CD4-positive, alpha-beta memory T cell (primary cell): ENCODE measurements at regions of chr12 and their contacts with region 1.

Region 1: DNA sequence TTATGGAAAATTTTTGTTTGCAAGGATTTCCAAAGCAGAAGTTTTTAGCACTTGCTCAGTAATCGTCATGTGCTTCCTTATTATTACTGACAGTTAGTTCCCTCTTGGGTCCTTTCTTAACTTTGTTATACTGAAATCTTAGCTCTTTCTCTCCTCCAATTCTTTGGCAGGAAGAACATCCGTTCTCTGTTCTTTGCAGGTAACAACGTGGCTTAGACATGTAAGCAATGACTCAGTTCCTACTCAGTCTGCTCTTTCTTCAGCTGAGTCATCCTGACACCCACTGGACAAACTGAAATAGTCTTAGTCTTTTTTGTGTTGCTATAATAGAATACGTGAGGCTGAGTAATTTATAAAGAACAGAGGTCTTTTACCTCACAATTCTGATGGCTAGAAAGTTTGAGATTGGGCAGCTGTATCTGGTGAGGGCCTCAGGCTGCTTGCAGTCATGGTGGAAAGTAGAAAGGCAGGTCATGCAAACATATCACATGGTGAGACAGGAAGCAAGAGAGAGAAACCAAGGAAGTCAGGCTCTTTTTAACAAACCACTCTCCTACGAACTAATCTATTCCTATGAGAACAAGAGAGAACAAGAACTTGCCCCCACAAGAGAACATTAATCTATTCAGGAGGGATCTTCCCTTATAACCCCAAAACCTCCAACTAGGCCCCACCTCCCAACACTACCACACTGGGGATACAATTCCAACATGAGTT is 49.2 kb downstream of the TESPA1 start:
- DNase-seq: peak; percentile 53 to 71 (median 60)
- H3K4me3 ChIP-seq: no peak overlapping the region
- H3K4me3 Mint-ChIP-seq: peak overlapping the region in 7 of 8 donors; percentile 42 to 85 (median 74)
- H3K27ac ChIP-seq: peak overlapping the region; percentile 35
- H3K27ac Mint-ChIP-seq: peak overlapping the region; percentile 80 to 96 (median 91)
- H3K4me1 ChIP-seq: peaks cover 45% of the 10 kb centered on the region
- H3K4me1 Mint-ChIP-seq: peaks cover 33 to 53% (median 44%) of the 10 kb centered on the region in 4 donors
- H3K27me3 ChIP-seq: no peaks in the 10 kb centered on the region
- H3K27me3 Mint-ChIP-seq: no peaks in the 10 kb centered on the region

Region 2: DNA sequence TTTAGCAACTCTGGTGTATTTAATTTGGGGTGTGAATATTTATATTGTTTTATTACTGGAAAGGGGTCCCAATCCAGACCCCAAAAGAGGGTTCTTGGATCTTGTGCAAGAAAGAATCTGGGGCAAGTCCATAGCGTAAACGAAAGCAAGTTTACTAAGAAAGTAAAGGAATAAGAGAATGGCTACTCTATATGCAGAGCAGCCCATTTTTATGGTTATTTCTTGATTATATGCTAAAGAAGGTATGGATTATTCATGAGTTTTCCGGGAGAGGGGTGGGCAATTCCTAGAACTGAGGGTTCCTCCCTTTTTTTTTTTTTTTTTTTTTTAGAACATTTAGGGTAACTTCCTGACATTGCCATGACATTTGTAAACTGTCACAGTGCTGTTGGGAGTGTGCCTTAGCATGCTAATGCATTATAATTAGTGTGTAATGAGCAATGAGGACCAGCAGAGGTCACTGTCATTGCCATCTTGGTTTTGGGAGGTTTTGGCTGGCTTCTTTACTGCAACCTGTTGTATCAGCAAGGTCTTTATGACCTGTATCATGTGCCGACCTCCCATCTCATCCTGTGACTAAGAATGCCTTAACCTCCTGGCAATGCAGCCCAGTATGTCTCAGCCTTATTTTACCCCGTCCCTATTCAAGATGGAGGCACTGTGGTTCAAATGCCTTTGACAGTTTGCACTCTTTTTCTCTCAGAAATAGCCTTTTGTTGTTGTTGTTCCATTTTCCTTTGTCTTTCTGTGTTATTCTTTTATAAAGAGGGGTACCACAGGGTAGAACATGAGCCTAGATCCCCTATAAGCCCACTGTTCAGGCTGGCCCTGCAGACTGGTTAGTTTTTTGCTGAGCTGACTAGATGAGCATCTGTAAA is 211.8 kb before region 1 on chr12:
- CTCF ChIA-PET with region 1: interaction called, 3 read pairs
- POLR2A ChIA-PET with region 1: no interaction called
- intact Hi-C with region 1: loop called (anchors 1 kb)
- DNase-seq: peak; percentile 38 to 54 (median 44)
- H3K4me3 ChIP-seq: no peak overlapping the region
- H3K4me3 Mint-ChIP-seq: no peak overlapping the region
- H3K27ac ChIP-seq: no peak overlapping the region
- H3K27ac Mint-ChIP-seq: no peak overlapping the region
- H3K4me1 ChIP-seq: peaks cover 4% of the 10 kb centered on the region
- H3K4me1 Mint-ChIP-seq: peaks cover 5 to 32% (median 12%) of the 10 kb centered on the region in 4 donors
- H3K27me3 ChIP-seq: no peaks in the 10 kb centered on the region
- H3K27me3 Mint-ChIP-seq: peaks cover 7 to 10% of the 10 kb centered on the region in 2 donors

Region 3: DNA sequence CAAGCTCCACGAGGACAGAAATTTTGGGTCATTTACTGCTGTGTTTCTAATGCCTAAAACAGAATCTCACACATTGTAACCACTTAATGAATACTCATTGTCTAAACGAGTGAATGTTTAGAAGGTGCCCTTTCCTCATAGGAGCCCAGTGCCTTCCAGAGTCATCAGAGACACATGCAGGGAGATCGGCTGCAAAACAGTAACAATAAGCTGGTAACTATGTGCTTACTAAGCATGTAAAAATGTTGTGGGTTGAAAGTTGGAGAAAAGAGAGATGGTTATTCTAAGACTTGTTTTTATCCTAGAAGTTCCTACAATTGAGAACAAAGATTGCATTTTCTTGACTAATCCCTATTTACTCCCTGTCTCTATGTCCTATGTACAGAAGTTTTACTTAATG is 41.8 kb after region 1 on chr12:
- CTCF ChIA-PET with region 1: interaction called, 4 read pairs
- POLR2A ChIA-PET with region 1: interaction called, 50 read pairs
- intact Hi-C with region 1: no loop called
- DNase-seq: no peak
- H3K4me3 ChIP-seq: peak overlapping the region; percentile 16 to 22
- H3K4me3 Mint-ChIP-seq: peak overlapping the region; percentile 81 to 99 (median 93)
- H3K27ac ChIP-seq: peak overlapping the region; percentile 38
- H3K27ac Mint-ChIP-seq: peak overlapping the region; percentile 84 to 99 (median 94)
- H3K4me1 ChIP-seq: peaks cover 98% of the 10 kb centered on the region
- H3K4me1 Mint-ChIP-seq: peaks cover 77 to 98% (median 90%) of the 10 kb centered on the region in 4 donors
- H3K27me3 ChIP-seq: no peaks in the 10 kb centered on the region
- H3K27me3 Mint-ChIP-seq: no peaks in the 10 kb centered on the region

Region 4: GRCh38 chr12:54984658-54985376 is 49.4 kb after region 1 on chr12 and contains the start of gene TESPA1:
- CTCF ChIA-PET with region 1: interaction called, 14 read pairs
- POLR2A ChIA-PET with region 1: interaction called, 50 read pairs
- intact Hi-C with region 1: no loop called
- DNase-seq: peak; percentile 86 to 94 (median 90)
- H3K4me3 ChIP-seq: peak within 1 kb of the TSS; percentile 66 to 86
- H3K4me3 Mint-ChIP-seq: peak within 1 kb of the TSS; percentile 89 to 99 (median 95)
- H3K27ac ChIP-seq: peak within 1 kb of the TSS; percentile 92
- H3K27ac Mint-ChIP-seq: peak within 1 kb of the TSS; percentile 97 to 100 (median 98)
- H3K4me1 ChIP-seq: peaks cover 71% of the 10 kb centered on the region
- H3K4me1 Mint-ChIP-seq: peaks cover 53 to 97% (median 64%) of the 10 kb centered on the region in 4 donors
- H3K27me3 ChIP-seq: no peaks in the 10 kb centered on the region
- H3K27me3 Mint-ChIP-seq: no peaks in the 10 kb centered on the region
- total RNA-seq, gene TESPA1: 269 to 287 TPM

Region 5: GRCh38 chr12:56346703-56347102 is 1411.3 kb after region 1 on chr12:
- CTCF ChIA-PET with region 1: no interaction called
- POLR2A ChIA-PET with region 1: no interaction called
- intact Hi-C with region 1: no loop called
- DNase-seq: peak in 1 of 5 donors; percentile 18
- H3K4me3 ChIP-seq: no peak overlapping the region
- H3K4me3 Mint-ChIP-seq: no peak overlapping the region
- H3K27ac ChIP-seq: no peak overlapping the region
- H3K27ac Mint-ChIP-seq: peak overlapping the region in 4 of 7 donors; percentile 30 to 79 (median 49)
- H3K4me1 ChIP-seq: no peaks in the 10 kb centered on the region
- H3K4me1 Mint-ChIP-seq: peaks cover 0 to 5% (median 2%) of the 10 kb centered on the region in 4 donors
- H3K27me3 ChIP-seq: no peaks in the 10 kb centered on the region
- H3K27me3 Mint-ChIP-seq: no peaks in the 10 kb centered on the region